Activated B cell treated with CpG ODN at 0.5 μM for 24 hours (primary cell): ENCODE measurements at regions of chr21 and their contacts with region 1.

Region 1: GRCh38 chr21:31731802-31732596 is at the start of gene SCAF4:
- DNase-seq: peak; percentile 82
- ATAC-seq: peak; percentile 84
- H3K4me3 Mint-ChIP-seq: no peak within 1 kb of the TSS
- H3K27ac Mint-ChIP-seq: peak within 1 kb of the TSS; percentile 84
- H3K4me1 Mint-ChIP-seq: peaks cover 21% of the 10 kb centered on the region
- H3K27me3 Mint-ChIP-seq: no peaks in the 10 kb centered on the region
- CTCF ChIP-seq: no peak
- total RNA-seq, gene SCAF4: 71.6 and 80.5 TPM in 2 replicates

Region 2: GRCh38 chr21:31326522-31327242 is 405.3 kb before region 1 on chr21:
- CTCF ChIA-PET with region 1: no interaction called
- POLR2A ChIA-PET with region 1: interaction called, 3 read pairs
- intact Hi-C with region 1: loop called (anchors 2 kb)
- DNase-seq: peak; percentile 25
- ATAC-seq: peak; percentile 94
- H3K4me3 Mint-ChIP-seq: peak overlapping the region; percentile 61
- H3K27ac Mint-ChIP-seq: peak overlapping the region; percentile 77
- H3K4me1 Mint-ChIP-seq: peaks cover 24% of the 10 kb centered on the region
- H3K27me3 Mint-ChIP-seq: no peaks in the 10 kb centered on the region
- CTCF ChIP-seq: no peak

Region 3: GRCh38 chr21:31457675-31458074 is 274.3 kb before region 1 on chr21:
- CTCF ChIA-PET with region 1: no interaction called
- POLR2A ChIA-PET with region 1: no interaction called
- intact Hi-C with region 1: no loop called
- DNase-seq: no peak
- ATAC-seq: no peak
- H3K4me3 Mint-ChIP-seq: no peak overlapping the region
- H3K27ac Mint-ChIP-seq: no peak overlapping the region
- H3K4me1 Mint-ChIP-seq: peaks cover 5% of the 10 kb centered on the region
- H3K27me3 Mint-ChIP-seq: no peaks in the 10 kb centered on the region
- CTCF ChIP-seq: no peak

Region 4: GRCh38 chr21:31592963-31593560 is 138.9 kb before region 1 on chr21:
- CTCF ChIA-PET with region 1: no interaction called
- POLR2A ChIA-PET with region 1: no interaction called
- intact Hi-C with region 1: no loop called
- DNase-seq: no peak
- ATAC-seq: no peak
- H3K4me3 Mint-ChIP-seq: no peak overlapping the region
- H3K27ac Mint-ChIP-seq: no peak overlapping the region
- H3K4me1 Mint-ChIP-seq: no peaks in the 10 kb centered on the region
- H3K27me3 Mint-ChIP-seq: peaks cover 2% of the 10 kb centered on the region
- CTCF ChIP-seq: no peak

Region 5: GRCh38 chr21:31683030-31683429 is 49.0 kb before region 1 on chr21:
- CTCF ChIA-PET with region 1: no interaction called
- POLR2A ChIA-PET with region 1: no interaction called
- intact Hi-C with region 1: no loop called
- DNase-seq: no peak
- ATAC-seq: no peak
- H3K4me3 Mint-ChIP-seq: no peak overlapping the region
- H3K27ac Mint-ChIP-seq: no peak overlapping the region
- H3K4me1 Mint-ChIP-seq: no peaks in the 10 kb centered on the region
- H3K27me3 Mint-ChIP-seq: no peaks in the 10 kb centered on the region
- CTCF ChIP-seq: no peak

Region 6: DNA sequence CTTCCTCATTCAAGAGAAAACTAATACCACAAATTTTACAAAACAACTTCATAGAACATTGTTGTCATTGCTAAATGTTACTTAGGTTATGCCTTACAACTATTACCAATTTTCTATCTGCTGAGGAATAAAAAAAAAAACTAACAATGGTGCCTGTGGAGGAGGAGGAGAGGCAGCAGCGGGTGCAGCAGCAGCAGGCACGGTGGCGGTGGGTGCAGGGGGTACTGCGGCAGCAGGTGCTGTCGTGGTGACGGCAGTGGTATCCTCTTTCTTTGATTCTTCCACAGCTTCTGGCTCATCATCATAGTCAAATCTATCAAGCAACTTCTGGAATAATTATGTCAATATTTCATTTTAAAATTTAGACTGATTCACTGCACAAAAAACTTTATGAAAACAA is 35.6 kb before region 1 on chr21:
- CTCF ChIA-PET with region 1: no interaction called
- POLR2A ChIA-PET with region 1: no interaction called
- intact Hi-C with region 1: loop called (anchors 5 kb)
- DNase-seq: no peak
- ATAC-seq: no peak
- H3K4me3 Mint-ChIP-seq: no peak overlapping the region
- H3K27ac Mint-ChIP-seq: no peak overlapping the region
- H3K4me1 Mint-ChIP-seq: no peaks in the 10 kb centered on the region
- H3K27me3 Mint-ChIP-seq: no peaks in the 10 kb centered on the region
- CTCF ChIP-seq: no peak

Region 7: GRCh38 chr21:31772674-31773555 is 40.9 kb after region 1 on chr21:
- CTCF ChIA-PET with region 1: no interaction called
- POLR2A ChIA-PET with region 1: interaction called, 90 read pairs
- intact Hi-C with region 1: loop called (anchors 1 kb)
- DNase-seq: peak; percentile 46
- ATAC-seq: peak; percentile 86
- H3K4me3 Mint-ChIP-seq: peak overlapping the region; percentile 76
- H3K27ac Mint-ChIP-seq: peak overlapping the region; percentile 98
- H3K4me1 Mint-ChIP-seq: peaks cover 61% of the 10 kb centered on the region
- H3K27me3 Mint-ChIP-seq: no peaks in the 10 kb centered on the region
- CTCF ChIP-seq: no peak

Region 8: GRCh38 chr21:32278518-32279376 is 546.7 kb after region 1 on chr21 and contains the start of gene MIS18A:
- CTCF ChIA-PET with region 1: no interaction called
- POLR2A ChIA-PET with region 1: no interaction called
- intact Hi-C with region 1: loop called (anchors 2 kb)
- DNase-seq: peak; percentile 96
- ATAC-seq: peak; percentile 96
- H3K4me3 Mint-ChIP-seq: peak within 1 kb of the TSS; percentile 98
- H3K27ac Mint-ChIP-seq: peak within 1 kb of the TSS; percentile 88
- H3K4me1 Mint-ChIP-seq: peaks cover 16% of the 10 kb centered on the region
- H3K27me3 Mint-ChIP-seq: no peaks in the 10 kb centered on the region
- CTCF ChIP-seq: no peak
- total RNA-seq, gene MIS18A: 6.8 and 7.7 TPM in 2 replicates

Region 9: DNA sequence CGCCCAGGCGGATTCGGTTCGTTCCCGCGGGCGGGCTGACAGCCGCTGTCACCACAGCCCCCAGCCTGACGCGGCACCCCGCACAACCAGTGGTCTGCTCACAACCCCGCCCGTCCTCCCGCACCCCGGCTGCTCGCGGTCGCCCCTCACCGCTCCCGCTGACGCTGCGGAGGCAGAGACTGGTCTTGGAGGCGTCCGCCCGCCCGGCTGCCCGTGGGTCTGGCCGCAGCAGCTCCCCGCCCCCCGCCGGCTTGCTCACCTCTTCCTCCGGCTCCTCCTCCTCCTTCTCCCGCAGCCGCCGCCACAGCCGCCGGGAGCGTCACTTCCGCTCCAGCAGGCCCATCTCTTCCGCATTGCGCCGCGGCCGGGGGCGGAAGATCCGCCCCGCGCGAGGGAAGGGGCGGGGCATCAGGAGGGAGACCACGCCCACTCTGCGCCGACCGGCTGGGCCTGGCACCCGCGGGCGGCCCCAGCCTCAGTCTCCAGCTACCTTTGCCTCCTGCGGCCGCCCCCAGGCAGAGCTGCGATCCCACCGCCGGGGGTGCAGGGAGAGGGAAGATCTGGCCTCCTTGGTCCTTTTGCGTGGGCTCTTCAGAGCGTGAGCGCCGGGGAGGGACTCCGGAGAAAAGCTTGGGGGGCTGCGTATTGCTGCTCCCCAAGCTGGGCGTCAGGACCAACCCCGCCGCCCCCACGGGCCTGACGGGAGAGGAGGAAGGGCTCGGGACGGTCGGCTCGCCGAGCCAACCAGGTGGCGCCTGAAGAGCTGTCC is 995.9 kb after region 1 on chr21 and contains the start of gene SYNJ1:
- CTCF ChIA-PET with region 1: no interaction called
- POLR2A ChIA-PET with region 1: no interaction called
- intact Hi-C with region 1: loop called (anchors 1 kb)
- DNase-seq: peak; percentile 94
- ATAC-seq: peak; percentile 91
- H3K4me3 Mint-ChIP-seq: peak within 1 kb of the TSS; percentile 93
- H3K27ac Mint-ChIP-seq: peak within 1 kb of the TSS; percentile 72
- H3K4me1 Mint-ChIP-seq: peaks cover 14% of the 10 kb centered on the region
- H3K27me3 Mint-ChIP-seq: no peaks in the 10 kb centered on the region
- CTCF ChIP-seq: no peak
- total RNA-seq, gene SYNJ1: 5.2 and 5.4 TPM in 2 replicates